ENCODE measurements at regions of chr18 and their contacts with region 1.

Region 1: DNA sequence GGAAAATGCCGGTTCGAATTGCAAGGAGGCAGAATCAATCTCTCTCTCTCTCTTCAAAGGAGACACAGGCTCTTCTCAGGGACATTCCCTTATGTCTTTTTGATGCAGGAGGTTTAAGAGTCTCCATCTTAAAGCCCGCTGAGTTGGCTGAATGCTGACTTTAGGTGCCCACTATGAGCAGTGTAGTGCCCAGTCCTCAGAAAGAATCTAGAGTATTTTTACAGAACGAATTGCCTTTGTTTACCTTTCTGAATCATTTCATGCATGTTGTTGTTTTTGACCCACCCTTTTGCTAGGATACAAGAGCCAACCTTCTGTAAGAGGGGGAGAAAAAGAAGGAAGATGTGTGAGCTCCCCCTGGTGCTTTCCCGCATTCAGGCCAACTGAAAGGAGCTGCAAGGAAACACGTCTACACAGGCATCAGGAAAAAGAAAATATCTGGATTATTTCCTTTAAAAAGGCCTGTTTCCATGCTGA is 193.5 kb upstream of the TCF4 start:
- DNase-seq: peak; percentile 23
- ATAC-seq: no peak
- H3K4me3 ChIP-seq: no peak overlapping the region
- H3K4me3 Mint-ChIP-seq: peak overlapping the region; percentile 87
- H3K27ac ChIP-seq: peak overlapping the region in 1 of 2 donors; percentile 71
- H3K27ac Mint-ChIP-seq: peak overlapping the region; percentile 95
- H3K4me1 ChIP-seq: peaks cover 19 to 27% of the 10 kb centered on the region in 2 donors
- H3K4me1 Mint-ChIP-seq: peaks cover 36% of the 10 kb centered on the region
- H3K27me3 ChIP-seq: peaks cover 0 to 4% (median 0%) of the 10 kb centered on the region in 4 experiments
- H3K27me3 Mint-ChIP-seq: peaks cover 11% of the 10 kb centered on the region
- CTCF ChIP-seq: no peak

Region 2: GRCh38 chr18:55243857-55244256 is 537.7 kb before region 1 on chr18:
- CTCF ChIA-PET with region 1: no interaction called
- POLR2A ChIA-PET with region 1: no interaction called
- intact Hi-C with region 1: loop called (anchors 10 kb)
- DNase-seq: no peak
- ATAC-seq: no peak
- H3K4me3 ChIP-seq: no peak overlapping the region
- H3K4me3 Mint-ChIP-seq: no peak overlapping the region
- H3K27ac ChIP-seq: no peak overlapping the region
- H3K27ac Mint-ChIP-seq: peak overlapping the region; percentile 60
- H3K4me1 ChIP-seq: peaks cover 30 to 48% of the 10 kb centered on the region in 2 donors
- H3K4me1 Mint-ChIP-seq: peaks cover 67% of the 10 kb centered on the region
- H3K27me3 ChIP-seq: no peaks in the 10 kb centered on the region
- H3K27me3 Mint-ChIP-seq: no peaks in the 10 kb centered on the region
- CTCF ChIP-seq: no peak

Region 3: DNA sequence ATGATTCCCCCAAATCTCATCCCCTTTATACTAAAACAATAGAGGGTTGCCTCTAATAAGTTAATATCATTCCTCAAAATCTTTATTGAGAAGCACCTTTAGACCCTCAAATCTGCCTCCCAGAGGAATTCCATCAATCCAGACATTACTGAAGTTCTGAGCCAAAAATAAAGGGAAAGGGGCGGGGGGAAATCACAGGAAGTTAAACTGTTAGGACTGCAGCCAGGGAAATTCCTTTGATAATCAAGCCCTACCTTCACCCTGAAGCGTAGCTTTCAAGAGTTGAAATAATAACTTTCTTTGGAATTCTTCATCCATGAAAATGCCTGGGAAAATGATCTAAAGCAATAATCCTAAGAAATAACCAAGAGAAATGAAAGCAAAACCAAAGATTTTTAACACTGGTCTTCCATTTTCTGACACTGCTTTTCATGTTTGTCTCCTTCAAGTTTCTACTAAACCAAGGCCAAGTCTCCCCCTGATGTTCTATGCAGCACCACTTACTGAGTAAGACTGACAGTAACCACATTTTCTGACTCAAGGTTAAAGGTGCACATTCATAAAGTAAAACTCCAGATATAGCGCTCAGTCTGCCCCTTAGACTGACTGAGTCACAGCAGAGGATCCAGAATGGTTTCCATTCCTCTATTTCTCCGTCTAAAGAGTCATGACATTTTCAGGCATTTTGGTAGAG is 271.7 kb before region 1 on chr18:
- CTCF ChIA-PET with region 1: no interaction called
- POLR2A ChIA-PET with region 1: no interaction called
- intact Hi-C with region 1: loop called (anchors 10 kb)
- DNase-seq: peak; percentile 49
- ATAC-seq: peak; percentile 22
- H3K4me3 ChIP-seq: peak overlapping the region; percentile 0 to 60 (median 43)
- H3K4me3 Mint-ChIP-seq: peak overlapping the region; percentile 82
- H3K27ac ChIP-seq: peak overlapping the region; percentile 65 to 85
- H3K27ac Mint-ChIP-seq: peak overlapping the region; percentile 89
- H3K4me1 ChIP-seq: peaks cover 24 to 27% of the 10 kb centered on the region in 2 donors
- H3K4me1 Mint-ChIP-seq: peaks cover 51% of the 10 kb centered on the region
- H3K27me3 ChIP-seq: no peaks in the 10 kb centered on the region
- H3K27me3 Mint-ChIP-seq: no peaks in the 10 kb centered on the region
- CTCF ChIP-seq: no peak

Region 4: DNA sequence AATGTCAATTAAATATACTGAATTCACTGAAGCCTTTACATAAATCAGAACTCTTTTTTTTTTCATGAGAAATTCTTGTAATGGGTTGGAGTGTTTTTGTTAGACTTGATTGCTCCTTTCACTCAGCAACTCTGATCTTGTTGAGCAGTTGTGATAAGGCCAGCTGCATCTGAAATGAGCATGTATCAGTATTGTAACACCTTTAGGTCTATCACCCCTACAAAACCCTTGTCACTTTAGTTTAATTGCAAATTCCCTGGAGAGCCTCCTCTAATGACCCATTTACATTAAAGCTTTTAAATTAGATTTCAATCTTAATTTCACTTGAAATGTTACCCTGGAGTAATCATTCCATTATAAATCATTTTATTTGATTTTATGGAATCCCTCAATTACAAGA is 153.3 kb after region 1 on chr18:
- CTCF ChIA-PET with region 1: no interaction called
- POLR2A ChIA-PET with region 1: no interaction called
- intact Hi-C with region 1: no loop called
- DNase-seq: no peak
- ATAC-seq: no peak
- H3K4me3 ChIP-seq: no peak overlapping the region
- H3K4me3 Mint-ChIP-seq: no peak overlapping the region
- H3K27ac ChIP-seq: no peak overlapping the region
- H3K27ac Mint-ChIP-seq: no peak overlapping the region
- H3K4me1 ChIP-seq: no peaks in the 10 kb centered on the region
- H3K4me1 Mint-ChIP-seq: no peaks in the 10 kb centered on the region
- H3K27me3 ChIP-seq: no peaks in the 10 kb centered on the region
- H3K27me3 Mint-ChIP-seq: no peaks in the 10 kb centered on the region
- CTCF ChIP-seq: no peak

Measured in B cell (primary cell).